Spleen (tissue), 13 donors: ENCODE measurements at regions of chr13 and their contacts with region 1.

Region 1: DNA sequence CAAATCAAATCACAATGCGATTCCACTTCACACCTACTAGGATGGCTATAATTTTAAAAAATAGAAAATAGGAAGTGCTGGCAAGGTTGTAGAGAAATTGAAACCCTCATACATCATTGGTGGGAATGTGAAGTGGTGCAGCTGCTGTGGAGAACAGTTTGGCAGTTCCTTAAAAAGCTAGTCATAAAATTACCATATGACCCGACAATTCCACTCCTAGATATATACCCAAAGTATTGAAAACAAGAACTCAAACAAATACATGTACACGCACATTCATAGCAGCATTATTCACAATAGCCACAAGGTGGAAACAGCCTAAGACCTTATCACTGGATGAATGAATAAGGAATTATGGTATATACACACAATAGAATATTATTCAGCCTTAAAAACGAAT is 12.0 kb downstream of the HMGB1 start:
- DNase-seq: no peak
- H3K4me3 ChIP-seq: no peak overlapping the region
- H3K27ac ChIP-seq: no peak overlapping the region
- H3K4me1 ChIP-seq: peaks cover 0 to 19% (median 9%) of the 10 kb centered on the region in 6 donors
- H3K27me3 ChIP-seq: no peaks in the 10 kb centered on the region
- CTCF ChIP-seq: peak in 2 of 11 experiments; percentile 8 to 12
- POLR2A ChIP-seq: no peak

Region 2: GRCh38 chr13:30355384-30355699 is 98.4 kb before region 1 on chr13:
- intact Hi-C with region 1: loop called (anchors 10 kb)
- DNase-seq: peak; percentile 90
- H3K4me3 ChIP-seq: no peak overlapping the region
- H3K27ac ChIP-seq: no peak overlapping the region
- H3K4me1 ChIP-seq: peaks cover 6 to 24% (median 14%) of the 10 kb centered on the region in 6 donors
- H3K27me3 ChIP-seq: no peaks in the 10 kb centered on the region
- CTCF ChIP-seq: peak in 10 of 11 experiments; percentile 23 to 73 (median 63)
- POLR2A ChIP-seq: no peak